GM23248 (cell line): ENCODE measurements at regions of chr20 and their contacts with region 1.

Region 1: GRCh38 chr20:2469991-2470422 is 582 bp downstream of the SNRPB start:
- DNase-seq: peak; percentile 76
- H3K4me3 ChIP-seq: peak overlapping the region; percentile 89
- H3K27ac ChIP-seq: peak overlapping the region; percentile 87
- H3K4me1 ChIP-seq: peaks cover 33% of the 10 kb centered on the region
- H3K27me3 ChIP-seq: no peaks in the 10 kb centered on the region

Region 2: GRCh38 chr20:2206957-2207769 is 262.8 kb before region 1 on chr20:
- in situ Hi-C with region 1: loop called (anchors 10 kb)
- DNase-seq: peak; percentile 88
- H3K4me3 ChIP-seq: peak overlapping the region; percentile 76
- H3K27ac ChIP-seq: no peak overlapping the region
- H3K4me1 ChIP-seq: peaks cover 28% of the 10 kb centered on the region
- H3K27me3 ChIP-seq: no peaks in the 10 kb centered on the region